ENCODE measurements at regions of chr17 and their contacts with region 1.

Region 1: DNA sequence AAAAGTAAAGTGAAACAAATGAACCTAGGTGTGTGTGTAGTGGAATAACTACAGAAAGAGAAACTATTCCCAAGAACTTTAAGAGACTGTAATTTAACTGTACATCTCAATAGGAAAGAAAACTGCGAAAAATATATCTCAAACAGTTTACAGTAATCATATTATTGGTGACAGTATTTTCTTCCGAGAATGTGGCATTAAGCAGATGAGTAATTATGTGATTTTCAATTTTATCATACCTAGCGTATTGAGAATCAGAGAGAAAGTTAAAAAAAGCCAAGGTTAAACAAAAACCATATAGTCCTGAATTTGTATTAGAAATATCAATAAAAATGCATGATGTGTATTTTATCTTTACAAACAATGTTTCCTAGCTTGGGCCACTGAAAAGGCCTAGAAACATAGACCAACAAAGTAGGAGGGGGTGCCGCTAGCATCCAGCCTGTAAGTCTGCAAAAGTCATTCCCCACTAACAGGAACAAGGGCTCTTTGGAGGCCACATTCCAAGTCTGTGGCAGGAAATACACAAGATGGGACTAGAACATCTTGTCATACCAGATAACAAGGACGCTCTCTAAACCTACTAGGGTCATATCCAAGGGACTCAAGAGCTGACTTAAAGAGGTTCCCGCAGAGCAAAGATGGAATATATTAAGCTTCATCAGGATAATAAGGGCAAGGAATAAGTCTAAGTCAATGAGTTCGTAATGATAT is 20.5 kb downstream of the RNF157 start:
- DNase-seq: no peak
- H3K4me3 ChIP-seq: no peak overlapping the region
- H3K27ac ChIP-seq: no peak overlapping the region
- H3K4me1 ChIP-seq: no peaks in the 10 kb centered on the region
- H3K27me3 ChIP-seq: no peaks in the 10 kb centered on the region
- CTCF ChIP-seq: no peak

Region 2: GRCh38 chr17:76166168-76166567 is 53.7 kb before region 1 on chr17:
- intact Hi-C with region 1: loop called (anchors 10 kb)
- DNase-seq: no peak
- H3K4me3 ChIP-seq: no peak overlapping the region
- H3K27ac ChIP-seq: no peak overlapping the region
- H3K4me1 ChIP-seq: peaks cover 0 to 12% (median 0%) of the 10 kb centered on the region in 3 donors
- H3K27me3 ChIP-seq: no peaks in the 10 kb centered on the region
- CTCF ChIP-seq: no peak

Region 3: GRCh38 chr17:76370261-76370993 is 150.6 kb after region 1 on chr17:
- intact Hi-C with region 1: no loop called
- DNase-seq: peak in 3 of 5 donors; percentile 40 to 84 (median 42)
- H3K4me3 ChIP-seq: no peak overlapping the region
- H3K27ac ChIP-seq: peak overlapping the region; percentile 14 to 46
- H3K4me1 ChIP-seq: peaks cover 0 to 3% (median 0%) of the 10 kb centered on the region in 3 donors
- H3K27me3 ChIP-seq: no peaks in the 10 kb centered on the region
- CTCF ChIP-seq: no peak

Measured in kidney (tissue), 22 donors.